Colonic mucosa (tissue), 4 donors: ENCODE measurements at regions of chr21 and their contacts with region 1.

Region 1: GRCh38 chr21:33894736-33895288 is 20.8 kb downstream of the ATP5PO start:
- DNase-seq: peak; percentile 58
- H3K4me3 ChIP-seq: no peak overlapping the region
- H3K27ac ChIP-seq: no peak overlapping the region
- H3K4me1 ChIP-seq: no peaks in the 10 kb centered on the region
- H3K27me3 ChIP-seq: no peaks in the 10 kb centered on the region
- CTCF ChIP-seq: no peak

Region 2: GRCh38 chr21:33608559-33608958 is 286.3 kb before region 1 on chr21:
- intact Hi-C with region 1: loop called (anchors 10 kb)
- DNase-seq: no peak
- H3K4me3 ChIP-seq: no peak overlapping the region
- H3K27ac ChIP-seq: no peak overlapping the region
- H3K4me1 ChIP-seq: no peaks in the 10 kb centered on the region
- H3K27me3 ChIP-seq: no peaks in the 10 kb centered on the region
- CTCF ChIP-seq: no peak

Region 3: GRCh38 chr21:33836408-33836807 is 58.4 kb before region 1 on chr21:
- intact Hi-C with region 1: loop called (anchors 10 kb)
- DNase-seq: no peak
- H3K4me3 ChIP-seq: no peak overlapping the region
- H3K27ac ChIP-seq: no peak overlapping the region
- H3K4me1 ChIP-seq: no peaks in the 10 kb centered on the region
- H3K27me3 ChIP-seq: no peaks in the 10 kb centered on the region
- CTCF ChIP-seq: no peak